Activated B cell treated with CpG ODN at 0.5 μM for 24 hours (primary cell): ENCODE measurements at regions of chr11 and their contacts with region 1.

Region 1: GRCh38 chr11:128757235-128757711 is 63.4 kb downstream of the FLI1 start:
- DNase-seq: peak; percentile 41
- ATAC-seq: peak; percentile 79
- H3K4me3 Mint-ChIP-seq: peak overlapping the region; percentile 66
- H3K27ac Mint-ChIP-seq: peak overlapping the region; percentile 91
- H3K4me1 Mint-ChIP-seq: peaks cover 80% of the 10 kb centered on the region
- H3K27me3 Mint-ChIP-seq: no peaks in the 10 kb centered on the region
- CTCF ChIP-seq: peak; percentile 81

Region 2: GRCh38 chr11:128201801-128202200 is 555.5 kb before region 1 on chr11:
- CTCF ChIA-PET with region 1: no interaction called
- POLR2A ChIA-PET with region 1: interaction called, 10 read pairs
- intact Hi-C with region 1: no loop called
- DNase-seq: no peak
- ATAC-seq: no peak
- H3K4me3 Mint-ChIP-seq: no peak overlapping the region
- H3K27ac Mint-ChIP-seq: no peak overlapping the region
- H3K4me1 Mint-ChIP-seq: no peaks in the 10 kb centered on the region
- H3K27me3 Mint-ChIP-seq: no peaks in the 10 kb centered on the region
- CTCF ChIP-seq: no peak

Region 3: DNA sequence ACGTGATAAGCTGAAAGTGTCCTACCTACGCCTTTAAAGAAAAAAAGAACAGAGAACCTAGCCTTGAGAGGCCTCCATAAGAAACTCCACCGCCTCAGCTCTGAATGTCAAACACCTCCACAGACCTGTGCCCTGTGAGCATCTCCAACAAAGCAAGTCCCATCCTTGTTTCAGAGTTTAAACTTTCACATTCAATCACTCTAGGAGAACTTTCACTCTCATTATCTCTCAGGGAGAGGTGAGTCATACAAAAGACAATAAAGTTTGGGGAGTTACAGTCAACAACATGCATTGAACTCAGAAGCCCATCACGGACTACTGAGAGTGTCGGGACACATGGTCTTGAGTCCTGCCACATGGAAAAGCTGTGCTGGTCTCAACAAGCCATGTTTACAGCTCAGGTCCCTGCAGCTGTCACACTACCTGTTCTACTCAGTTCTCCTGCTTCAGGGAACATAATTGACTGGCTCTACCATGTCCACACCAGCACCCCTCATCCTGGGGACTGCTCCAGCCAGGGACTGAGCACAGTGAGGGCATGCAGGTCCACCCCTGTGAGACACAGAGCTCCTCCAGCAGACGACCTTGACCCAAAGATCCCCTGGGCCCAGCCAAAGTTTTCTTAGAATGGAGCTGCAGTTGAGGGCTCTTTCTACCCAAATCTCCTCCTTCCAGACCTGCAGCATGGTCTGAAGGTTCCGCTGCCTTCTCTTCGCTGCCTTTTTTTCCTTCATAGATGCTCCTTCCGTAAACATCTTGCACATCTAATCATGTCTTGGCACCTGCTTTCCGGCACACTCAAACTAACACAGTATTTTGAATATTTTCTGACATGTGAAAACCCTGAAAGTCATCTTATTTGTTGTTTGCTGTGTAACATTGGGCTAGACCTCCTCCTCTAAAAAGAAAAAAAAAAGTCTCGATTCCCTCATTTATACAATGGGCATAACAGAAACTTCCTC is 284.9 kb before region 1 on chr11:
- CTCF ChIA-PET with region 1: interaction called, 3 read pairs
- POLR2A ChIA-PET with region 1: interaction called, 5 read pairs
- intact Hi-C with region 1: loop called (anchors 1 kb)
- DNase-seq: no peak
- ATAC-seq: peak; percentile 26
- H3K4me3 Mint-ChIP-seq: peak overlapping the region; percentile 60
- H3K27ac Mint-ChIP-seq: peak overlapping the region; percentile 89
- H3K4me1 Mint-ChIP-seq: peaks cover 100% of the 10 kb centered on the region
- H3K27me3 Mint-ChIP-seq: no peaks in the 10 kb centered on the region
- CTCF ChIP-seq: no peak

Region 4: DNA sequence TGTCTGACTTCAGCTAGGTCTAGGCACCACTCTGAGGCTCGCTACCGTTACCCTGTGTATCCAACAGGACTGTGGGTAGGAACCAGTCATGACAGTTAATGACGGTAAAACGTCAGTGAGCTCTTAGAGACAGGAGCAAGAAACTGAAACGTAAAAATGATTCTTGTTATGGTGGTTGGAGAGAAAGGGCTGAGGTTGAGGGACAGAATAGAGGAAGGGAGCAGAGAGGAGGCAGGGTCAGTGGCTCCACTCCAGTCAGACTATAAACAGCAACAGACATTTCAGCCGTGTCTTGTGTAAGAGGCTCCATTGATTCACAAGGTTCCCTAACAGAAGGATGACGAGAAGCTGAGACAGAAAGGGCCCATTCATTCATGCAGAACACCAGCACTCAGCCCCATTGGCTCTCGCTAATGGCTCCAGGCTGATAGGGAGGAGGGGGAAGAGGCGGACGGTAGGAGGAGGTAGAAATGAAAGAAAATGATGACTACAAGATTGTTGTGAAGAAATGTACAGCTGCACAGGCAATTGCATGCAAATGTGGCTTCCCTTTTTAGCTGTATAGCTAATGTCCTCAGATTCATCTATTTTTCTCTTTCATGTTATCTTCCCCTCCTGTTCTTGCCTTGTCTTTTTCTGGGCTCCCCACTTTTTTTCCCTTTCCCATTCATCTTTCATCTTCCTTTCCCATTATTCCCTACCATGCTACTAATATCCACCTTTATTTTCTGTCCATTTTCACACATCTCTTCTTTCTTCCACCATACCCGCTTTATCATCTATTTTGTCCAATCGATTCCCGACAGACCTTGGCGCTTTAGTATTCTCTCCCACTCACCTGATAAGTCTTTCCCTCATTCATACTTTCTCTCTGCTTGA is 204.3 kb before region 1 on chr11:
- CTCF ChIA-PET with region 1: interaction called, 7 read pairs
- POLR2A ChIA-PET with region 1: interaction called, 10 read pairs
- intact Hi-C with region 1: loop called (anchors 1 kb)
- DNase-seq: peak; percentile 47
- ATAC-seq: peak; percentile 78
- H3K4me3 Mint-ChIP-seq: peak overlapping the region; percentile 73
- H3K27ac Mint-ChIP-seq: peak overlapping the region; percentile 98
- H3K4me1 Mint-ChIP-seq: peaks cover 72% of the 10 kb centered on the region
- H3K27me3 Mint-ChIP-seq: no peaks in the 10 kb centered on the region
- CTCF ChIP-seq: no peak

Region 5: GRCh38 chr11:128714881-128715280 is 42.4 kb before region 1 on chr11:
- CTCF ChIA-PET with region 1: interaction called, 11 read pairs
- POLR2A ChIA-PET with region 1: interaction called, 21 read pairs
- intact Hi-C with region 1: loop called (anchors 5 kb)
- DNase-seq: no peak
- ATAC-seq: no peak
- H3K4me3 Mint-ChIP-seq: no peak overlapping the region
- H3K27ac Mint-ChIP-seq: peak overlapping the region; percentile 98
- H3K4me1 Mint-ChIP-seq: peaks cover 97% of the 10 kb centered on the region
- H3K27me3 Mint-ChIP-seq: no peaks in the 10 kb centered on the region
- CTCF ChIP-seq: no peak

Region 6: GRCh38 chr11:128776424-128777284 is 19.4 kb after region 1 on chr11:
- CTCF ChIA-PET with region 1: interaction called, 6 read pairs
- POLR2A ChIA-PET with region 1: interaction called, 5 read pairs
- intact Hi-C with region 1: loop called (anchors 1 kb)
- DNase-seq: no peak
- ATAC-seq: no peak
- H3K4me3 Mint-ChIP-seq: no peak overlapping the region
- H3K27ac Mint-ChIP-seq: peak overlapping the region; percentile 56
- H3K4me1 Mint-ChIP-seq: peaks cover 42% of the 10 kb centered on the region
- H3K27me3 Mint-ChIP-seq: no peaks in the 10 kb centered on the region
- CTCF ChIP-seq: no peak

Region 7: GRCh38 chr11:128859563-128860441 is 102.5 kb after region 1 on chr11:
- CTCF ChIA-PET with region 1: interaction called, 3 read pairs
- POLR2A ChIA-PET with region 1: no interaction called
- intact Hi-C with region 1: loop called (anchors 1 kb)
- DNase-seq: peak; percentile 77
- ATAC-seq: peak; percentile 98
- H3K4me3 Mint-ChIP-seq: no peak overlapping the region
- H3K27ac Mint-ChIP-seq: no peak overlapping the region
- H3K4me1 Mint-ChIP-seq: peaks cover 16% of the 10 kb centered on the region
- H3K27me3 Mint-ChIP-seq: no peaks in the 10 kb centered on the region
- CTCF ChIP-seq: peak; percentile 54